ENCODE measurements at regions of chr12 and their contacts with region 1.

Region 1: DNA sequence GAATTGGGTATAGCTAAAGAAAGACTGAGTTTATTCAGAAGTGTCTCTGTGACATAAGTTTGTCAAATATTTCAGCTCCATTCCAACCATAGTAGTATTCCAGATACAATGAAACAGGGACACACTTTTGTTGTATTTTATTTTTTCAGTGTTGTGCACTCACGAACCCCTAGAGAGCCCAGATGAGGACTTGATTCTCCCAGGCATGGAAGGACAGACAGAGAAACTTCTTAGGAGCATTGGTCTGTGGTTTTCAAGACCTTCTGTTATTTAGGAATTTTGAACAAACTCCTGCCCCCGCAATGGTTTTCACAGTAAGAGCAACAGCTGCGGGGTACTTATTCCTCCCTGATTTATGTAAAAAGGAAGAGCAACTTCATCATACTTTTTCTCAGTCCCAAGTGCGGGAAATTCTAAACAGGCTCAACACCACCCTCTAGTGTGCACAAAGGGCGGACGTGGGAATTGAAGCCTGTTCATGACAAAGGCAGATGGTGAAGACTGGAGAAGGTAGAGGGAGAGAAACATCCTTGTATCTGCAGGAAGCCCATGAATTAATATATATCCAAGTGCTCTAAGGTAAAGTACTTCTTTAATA is 147.6 kb downstream of the PAH start:
- H3K4me3 Mint-ChIP-seq: no peak overlapping the region
- H3K27ac Mint-ChIP-seq: no peak overlapping the region
- H3K4me1 Mint-ChIP-seq: no peaks in the 10 kb centered on the region
- H3K27me3 Mint-ChIP-seq: peaks cover 5% of the 10 kb centered on the region

Region 2: GRCh38 chr12:101939856-101940265 is 829.6 kb before region 1 on chr12:
- intact Hi-C with region 1: loop called (anchors 2 kb)
- H3K4me3 Mint-ChIP-seq: no peak overlapping the region
- H3K27ac Mint-ChIP-seq: no peak overlapping the region
- H3K4me1 Mint-ChIP-seq: peaks cover 16% of the 10 kb centered on the region
- H3K27me3 Mint-ChIP-seq: peaks cover 15% of the 10 kb centered on the region

Region 3: DNA sequence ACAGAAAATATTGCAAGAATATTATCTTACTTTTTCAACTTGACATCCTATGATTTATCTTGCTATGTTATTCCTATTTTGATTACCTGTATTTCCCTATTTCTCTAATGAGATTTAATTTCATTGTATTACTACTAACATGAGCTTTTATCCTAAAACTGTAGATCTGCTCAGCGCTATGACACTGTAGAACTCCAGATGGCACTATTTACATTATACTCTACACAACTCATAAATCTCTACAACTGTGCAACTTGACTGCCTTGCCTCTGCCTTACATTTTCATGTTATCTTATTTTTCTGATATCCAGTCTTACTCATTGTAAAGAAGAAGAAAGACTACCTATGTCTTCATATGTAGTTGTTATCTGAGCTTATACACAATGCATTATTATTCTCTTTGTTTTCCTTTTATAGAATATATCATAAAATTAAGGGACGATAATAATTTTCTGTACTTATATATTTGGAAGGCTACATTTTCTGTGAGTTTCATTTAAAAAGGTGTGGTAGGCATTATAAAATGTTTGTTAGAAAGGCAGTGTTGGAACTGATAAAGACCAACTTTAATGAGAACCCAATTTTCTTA is 673.6 kb before region 1 on chr12:
- intact Hi-C with region 1: loop called (anchors 10 kb)
- H3K4me3 Mint-ChIP-seq: no peak overlapping the region
- H3K27ac Mint-ChIP-seq: no peak overlapping the region
- H3K4me1 Mint-ChIP-seq: no peaks in the 10 kb centered on the region
- H3K27me3 Mint-ChIP-seq: no peaks in the 10 kb centered on the region

Region 4: GRCh38 chr12:102300824-102301461 is 468.5 kb before region 1 on chr12:
- intact Hi-C with region 1: loop called (anchors 2 kb)
- H3K4me3 Mint-ChIP-seq: no peak overlapping the region
- H3K27ac Mint-ChIP-seq: no peak overlapping the region
- H3K4me1 Mint-ChIP-seq: no peaks in the 10 kb centered on the region
- H3K27me3 Mint-ChIP-seq: peaks cover 2% of the 10 kb centered on the region

Region 5: DNA sequence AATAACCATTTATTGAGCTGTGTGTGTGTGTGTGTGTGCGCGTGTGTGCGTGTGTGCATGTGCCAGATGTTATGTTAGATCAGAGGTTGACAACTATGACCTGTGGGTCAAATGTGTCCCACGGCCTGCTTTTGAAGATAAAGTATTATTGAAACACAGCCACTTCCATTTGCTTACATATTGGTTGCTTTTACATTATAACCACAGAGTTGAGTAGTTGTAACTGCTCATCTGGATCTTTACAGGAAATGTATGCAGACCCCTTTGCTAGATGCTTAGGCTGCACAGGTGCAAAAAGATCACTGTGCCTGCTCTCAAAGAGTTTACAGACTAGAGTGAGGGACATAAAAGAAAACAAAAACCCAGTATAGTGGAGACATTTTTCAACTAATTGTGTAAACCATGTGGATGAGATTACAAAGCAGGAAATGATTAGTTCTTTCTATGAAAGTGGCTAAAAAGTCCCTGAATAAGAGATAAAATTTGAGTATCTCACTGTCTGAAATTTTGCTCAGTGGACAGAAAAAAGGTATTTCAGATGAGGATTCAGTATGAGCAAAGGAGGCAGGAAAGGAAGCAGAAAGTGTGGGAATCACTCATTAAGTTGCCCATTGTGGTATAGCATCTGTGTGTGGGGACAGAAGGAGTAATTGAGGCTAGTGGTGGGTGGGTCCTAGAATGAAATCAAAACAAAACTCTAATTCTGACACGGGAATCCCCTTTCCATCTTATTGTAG is 40.7 kb before region 1 on chr12:
- intact Hi-C with region 1: no loop called
- H3K4me3 Mint-ChIP-seq: no peak overlapping the region
- H3K27ac Mint-ChIP-seq: no peak overlapping the region
- H3K4me1 Mint-ChIP-seq: no peaks in the 10 kb centered on the region
- H3K27me3 Mint-ChIP-seq: no peaks in the 10 kb centered on the region

Region 6: GRCh38 chr12:102811110-102811737 is 41.8 kb after region 1 on chr12:
- intact Hi-C with region 1: no loop called
- H3K4me3 Mint-ChIP-seq: no peak overlapping the region
- H3K27ac Mint-ChIP-seq: no peak overlapping the region
- H3K4me1 Mint-ChIP-seq: no peaks in the 10 kb centered on the region
- H3K27me3 Mint-ChIP-seq: peaks cover 9% of the 10 kb centered on the region